Activated CD8-positive, alpha-beta T cell treated with anti-CD3 and anti-CD28 coated beads for 36 hours (primary cell): ENCODE measurements at regions of chr3 and their contacts with region 1.

Region 1: DNA sequence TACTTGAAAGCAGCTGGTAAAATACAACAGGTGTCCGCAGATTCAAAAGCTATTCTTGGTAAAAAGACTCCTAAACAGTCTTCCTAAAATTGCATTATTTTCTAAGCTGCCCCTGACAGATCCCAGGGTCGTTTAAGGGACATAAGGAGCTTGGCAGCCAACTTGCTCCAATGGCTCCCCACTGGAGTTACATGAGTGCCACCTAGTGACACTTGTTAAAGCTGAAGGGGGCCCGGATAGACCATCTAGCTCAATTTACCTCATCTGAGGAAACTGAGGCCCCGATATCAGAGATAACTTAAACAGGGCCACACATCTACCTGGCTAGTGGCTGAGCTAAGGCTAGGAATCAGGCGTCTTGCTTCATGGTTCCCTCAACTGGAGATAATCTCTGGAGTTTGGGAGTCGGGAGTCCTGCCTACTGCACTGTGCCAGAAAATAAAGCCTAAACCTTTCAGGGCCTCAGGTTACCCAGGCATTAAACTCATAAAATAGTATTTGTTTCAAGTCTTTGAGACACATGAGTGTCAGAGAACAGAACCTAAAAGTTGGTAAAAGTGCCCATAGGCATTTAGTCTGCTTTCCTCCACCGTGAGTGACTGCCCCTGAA is 6.5 kb upstream of the TBC1D23 start:
- DNase-seq: peak; percentile 67
- ATAC-seq: peak; percentile 83
- H3K4me3 Mint-ChIP-seq: no peak overlapping the region
- H3K27ac Mint-ChIP-seq: no peak overlapping the region
- H3K4me1 Mint-ChIP-seq: peaks cover 13% of the 10 kb centered on the region
- H3K27me3 Mint-ChIP-seq: no peaks in the 10 kb centered on the region
- CTCF ChIP-seq: peak; percentile 78

Region 2: GRCh38 chr3:99833617-99834205 is 420.6 kb before region 1 on chr3:
- CTCF ChIA-PET with region 1: interaction called, 26 read pairs
- POLR2A ChIA-PET with region 1: no interaction called
- intact Hi-C with region 1: loop called (anchors 2 kb)
- DNase-seq: no peak
- ATAC-seq: no peak
- H3K4me3 Mint-ChIP-seq: no peak overlapping the region
- H3K27ac Mint-ChIP-seq: no peak overlapping the region
- H3K4me1 Mint-ChIP-seq: peaks cover 15% of the 10 kb centered on the region
- H3K27me3 Mint-ChIP-seq: no peaks in the 10 kb centered on the region
- CTCF ChIP-seq: no peak

Region 3: DNA sequence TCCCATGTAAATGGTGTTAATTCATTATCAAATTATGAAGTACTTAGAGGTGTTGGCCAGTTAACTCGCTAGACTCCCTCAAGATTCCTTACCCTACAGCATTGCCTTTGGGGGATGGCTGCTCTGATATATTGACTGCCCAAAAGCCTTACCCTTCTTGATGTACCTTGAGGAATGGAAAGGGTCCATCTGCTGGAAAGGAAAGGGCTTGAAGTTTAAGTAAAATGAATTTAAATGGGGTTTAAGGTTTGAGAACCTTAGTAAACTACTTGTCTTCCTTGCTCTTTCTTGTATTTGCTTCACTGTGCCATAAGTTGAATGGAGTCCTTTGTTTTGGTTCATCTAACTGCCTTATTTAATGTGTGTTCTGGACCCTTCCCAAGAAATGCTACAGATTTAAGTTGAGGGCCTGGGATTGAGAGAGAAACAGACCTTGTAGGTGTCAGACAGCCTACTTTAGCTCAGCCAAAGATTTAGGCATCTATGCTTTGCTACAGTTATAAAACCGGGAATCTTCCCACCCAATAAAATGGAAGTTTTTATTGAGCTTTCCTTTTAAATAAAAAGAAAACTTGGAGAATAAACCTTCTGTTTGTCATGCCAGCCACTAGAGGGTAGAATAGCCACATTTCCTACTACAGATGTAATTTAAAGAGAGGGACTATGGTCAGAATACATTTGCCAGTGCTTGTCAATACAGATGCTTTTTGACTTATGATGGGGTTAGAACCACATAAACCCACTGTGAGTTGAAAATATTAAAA is 411.3 kb before region 1 on chr3:
- CTCF ChIA-PET with region 1: interaction called, 13 read pairs
- POLR2A ChIA-PET with region 1: no interaction called
- intact Hi-C with region 1: no loop called
- DNase-seq: no peak
- ATAC-seq: no peak
- H3K4me3 Mint-ChIP-seq: no peak overlapping the region
- H3K27ac Mint-ChIP-seq: no peak overlapping the region
- H3K4me1 Mint-ChIP-seq: peaks cover 12% of the 10 kb centered on the region
- H3K27me3 Mint-ChIP-seq: no peaks in the 10 kb centered on the region
- CTCF ChIP-seq: peak; percentile 62

Region 4: GRCh38 chr3:100060685-100061484 is 193.4 kb before region 1 on chr3:
- CTCF ChIA-PET with region 1: interaction called, 12 read pairs
- POLR2A ChIA-PET with region 1: no interaction called
- intact Hi-C with region 1: no loop called
- DNase-seq: peak; percentile 21
- ATAC-seq: peak; percentile 53
- H3K4me3 Mint-ChIP-seq: no peak overlapping the region
- H3K27ac Mint-ChIP-seq: no peak overlapping the region
- H3K4me1 Mint-ChIP-seq: no peaks in the 10 kb centered on the region
- H3K27me3 Mint-ChIP-seq: no peaks in the 10 kb centered on the region
- CTCF ChIP-seq: no peak

Region 5: GRCh38 chr3:100492059-100493006 is 238.1 kb after region 1 on chr3 and contains the start of gene TMEM45A:
- CTCF ChIA-PET with region 1: no interaction called
- POLR2A ChIA-PET with region 1: no interaction called
- intact Hi-C with region 1: no loop called
- DNase-seq: peak; percentile 82
- ATAC-seq: peak; percentile 99
- H3K4me3 Mint-ChIP-seq: peak within 1 kb of the TSS; percentile 84
- H3K27ac Mint-ChIP-seq: peak within 1 kb of the TSS; percentile 60
- H3K4me1 Mint-ChIP-seq: peaks cover 7% of the 10 kb centered on the region
- H3K27me3 Mint-ChIP-seq: peaks cover 34% of the 10 kb centered on the region
- CTCF ChIP-seq: no peak
- total RNA-seq, gene TMEM45A: 1.1 to 1.8 TPM